ENCODE measurements at regions of chr19 and their contacts with region 1.

Region 1: DNA sequence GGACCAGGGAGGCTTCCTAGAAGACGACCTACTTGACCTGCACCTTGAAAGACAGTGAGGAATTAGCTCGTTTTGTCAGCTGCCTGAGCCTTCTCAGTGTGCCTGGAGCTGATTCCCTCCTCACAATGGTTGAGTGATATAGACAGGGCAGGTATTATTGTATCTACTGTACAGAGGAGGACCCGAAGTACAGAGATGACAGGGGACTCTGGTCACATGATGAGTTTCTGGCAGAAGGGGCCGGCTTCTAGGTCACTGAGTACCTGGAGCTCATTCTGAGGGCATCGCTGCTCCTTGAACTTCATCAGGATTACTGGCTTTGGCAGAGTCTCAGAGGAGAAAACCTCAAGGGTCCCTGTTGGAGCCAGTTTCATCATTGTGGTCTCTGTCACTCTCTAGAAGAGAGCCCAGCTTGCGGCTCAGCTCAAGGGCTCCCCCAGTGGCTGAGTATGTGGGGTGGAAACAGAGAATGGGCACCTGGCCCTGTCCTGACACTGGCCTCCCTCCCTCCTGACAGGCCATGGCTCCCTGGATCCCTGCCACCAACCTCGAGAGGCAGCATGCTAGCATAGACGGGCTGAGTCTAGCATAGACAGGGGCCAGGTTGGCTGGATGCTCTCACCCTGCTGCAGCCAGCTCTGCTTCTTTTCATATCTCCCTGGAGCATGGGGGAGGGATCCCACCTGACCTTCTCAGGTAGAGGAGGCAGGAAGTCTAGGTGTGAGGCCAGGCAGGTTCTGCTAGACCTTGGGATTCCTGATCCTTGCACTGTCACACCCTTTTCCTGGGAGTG is 38.7 kb downstream of the NFIX start:
- DNase-seq: peak; percentile 76

Region 2: GRCh38 chr19:12983542-12984142 is 50.4 kb before region 1 on chr19:
- CTCF ChIA-PET with region 1: interaction called, 15 read pairs
- POLR2A ChIA-PET with region 1: interaction called, 3 read pairs
- DNase-seq: peak; percentile 90

Region 3: GRCh38 chr19:13044231-13044836 is 10.3 kb after region 1 on chr19:
- CTCF ChIA-PET with region 1: interaction called, 18 read pairs
- POLR2A ChIA-PET with region 1: no interaction called
- DNase-seq: no peak